ENCODE measurements at regions of chr20 and their contacts with region 1.

Region 1: GRCh38 chr20:35994994-35995453 is 26.6 kb downstream of the CNBD2 start:
- DNase-seq: peak; percentile 94
- ATAC-seq: peak; percentile 97
- H3K4me3 Mint-ChIP-seq: no peak overlapping the region
- H3K27ac Mint-ChIP-seq: no peak overlapping the region
- H3K4me1 Mint-ChIP-seq: peaks cover 10% of the 10 kb centered on the region
- H3K27me3 Mint-ChIP-seq: no peaks in the 10 kb centered on the region
- CTCF ChIP-seq: peak; percentile 71

Region 2: GRCh38 chr20:35968931-35969330 is 26.1 kb before region 1 on chr20:
- CTCF ChIA-PET with region 1: interaction called, 23 read pairs
- POLR2A ChIA-PET with region 1: no interaction called
- DNase-seq: no peak
- ATAC-seq: no peak
- H3K4me3 Mint-ChIP-seq: no peak overlapping the region
- H3K27ac Mint-ChIP-seq: no peak overlapping the region
- H3K4me1 Mint-ChIP-seq: peaks cover 11% of the 10 kb centered on the region
- H3K27me3 Mint-ChIP-seq: no peaks in the 10 kb centered on the region; the same call in 1 of the 2 replicates
- CTCF ChIP-seq: no peak

Region 3: DNA sequence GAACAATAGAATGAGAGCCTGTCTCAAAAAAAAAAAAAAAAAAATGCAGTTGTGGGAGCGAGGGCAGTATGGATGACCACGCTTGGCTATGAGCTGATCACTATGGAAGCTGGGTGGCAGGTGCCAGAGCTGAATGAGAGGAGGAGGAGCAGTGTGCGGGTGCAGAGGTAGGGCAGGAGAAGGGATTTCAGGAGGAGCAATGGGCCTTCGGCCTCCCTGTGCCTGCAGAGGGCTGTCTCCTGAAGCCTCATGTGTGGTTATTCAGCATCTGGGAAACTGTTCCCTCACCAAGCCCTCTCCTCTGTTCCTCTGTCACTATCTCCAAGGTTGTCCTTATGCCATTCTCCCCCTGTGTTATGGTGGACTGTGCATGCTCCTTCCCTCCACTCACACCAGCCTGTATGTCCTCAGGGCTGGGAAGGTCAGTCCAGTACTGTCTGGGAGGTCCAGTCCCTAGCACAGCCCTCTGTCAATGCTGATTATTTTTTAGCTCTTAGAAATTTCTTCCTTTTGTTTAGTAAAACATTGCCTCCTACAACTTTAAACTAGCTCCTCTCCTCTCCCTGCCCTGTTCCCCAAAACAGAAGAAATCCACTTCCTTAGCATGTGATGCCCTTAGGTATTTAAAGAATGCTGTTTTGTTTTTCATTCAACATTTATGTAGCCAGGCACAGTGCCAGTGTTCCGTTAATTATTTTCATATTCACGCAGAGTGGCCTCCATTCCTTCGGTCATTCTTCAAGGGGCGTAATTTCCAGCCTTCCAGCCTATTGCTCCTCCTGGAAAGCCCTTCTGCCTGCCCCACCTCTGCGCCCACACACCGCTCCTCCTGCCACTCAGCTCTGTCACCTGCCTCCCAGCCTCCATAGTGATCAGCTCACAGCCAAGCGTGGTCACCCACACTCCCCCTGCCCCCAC is 22.3 kb after region 1 on chr20:
- CTCF ChIA-PET with region 1: interaction called, 51 read pairs
- POLR2A ChIA-PET with region 1: no interaction called
- DNase-seq: no peak
- ATAC-seq: peak; percentile 48
- H3K4me3 Mint-ChIP-seq: no peak overlapping the region
- H3K27ac Mint-ChIP-seq: no peak overlapping the region
- H3K4me1 Mint-ChIP-seq: peaks cover 13% of the 10 kb centered on the region
- H3K27me3 Mint-ChIP-seq: no peaks in the 10 kb centered on the region; the same call in 1 of the 2 replicates
- CTCF ChIP-seq: no peak

Region 4: DNA sequence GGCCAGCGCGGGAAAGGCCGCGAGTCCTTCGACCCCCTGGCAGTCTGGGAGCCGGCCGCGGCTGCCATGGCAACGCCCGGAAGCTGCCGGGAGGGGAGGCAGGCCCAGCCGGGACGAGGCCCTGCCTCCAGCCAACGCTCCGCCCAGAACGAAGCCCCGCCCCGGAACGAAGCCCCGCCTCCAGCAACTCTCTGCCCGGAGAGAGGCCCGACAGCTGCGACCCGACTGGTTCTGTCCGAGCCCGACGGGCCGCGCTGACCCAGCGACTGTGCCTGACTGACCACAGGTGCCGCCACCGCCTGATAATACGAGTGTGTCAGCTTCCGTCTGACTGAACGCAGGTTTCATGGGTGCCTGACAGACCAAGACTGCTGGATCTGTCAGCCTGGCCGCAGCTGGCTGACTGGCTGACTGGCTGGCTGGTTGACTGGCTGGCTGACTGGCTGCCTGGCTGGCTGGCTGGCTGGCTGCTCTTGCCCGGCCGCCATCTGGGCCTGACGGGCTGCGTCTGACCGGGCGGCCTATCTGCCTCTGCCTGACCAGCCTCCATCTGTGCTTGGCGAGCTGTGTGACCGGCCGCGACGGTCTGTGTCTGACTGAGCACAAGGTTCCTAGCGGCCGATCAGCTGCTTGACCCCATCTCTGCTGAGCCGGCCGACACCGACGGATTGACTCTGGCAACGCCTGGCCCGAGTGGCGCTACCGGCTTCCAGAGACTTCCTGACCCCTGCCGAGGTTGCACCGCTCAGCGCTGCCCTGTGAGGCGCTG is 69.8 kb after region 1 on chr20:
- CTCF ChIA-PET with region 1: interaction called, 19 read pairs
- POLR2A ChIA-PET with region 1: no interaction called
- DNase-seq: peak; percentile 98
- ATAC-seq: peak; percentile 95
- H3K4me3 Mint-ChIP-seq: peak overlapping the region; percentile 71
- H3K27ac Mint-ChIP-seq: no peak overlapping the region
- H3K4me1 Mint-ChIP-seq: peaks cover 7% of the 10 kb centered on the region; the same call in 1 of the 2 replicates
- H3K27me3 Mint-ChIP-seq: peaks cover 44% of the 10 kb centered on the region
- CTCF ChIP-seq: no peak

Region 5: DNA sequence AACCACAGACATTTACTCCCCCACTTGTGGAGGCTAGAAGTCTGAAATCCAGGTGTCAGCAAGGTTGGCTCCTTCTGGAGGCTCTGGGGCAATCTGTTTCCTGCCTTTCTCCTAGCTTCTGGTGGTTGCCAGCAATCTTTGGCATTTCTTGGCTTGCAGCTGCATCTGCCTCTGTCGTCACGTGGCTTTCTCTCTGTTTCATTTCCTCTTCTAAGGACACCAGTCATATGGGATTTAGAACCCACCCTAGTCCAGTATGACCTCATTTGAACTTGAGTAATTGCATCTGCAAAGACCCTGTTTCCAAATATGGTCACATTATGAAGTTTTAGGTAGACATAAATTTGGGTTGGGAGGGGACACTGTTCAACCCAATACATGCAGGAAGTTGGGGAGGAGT is 103.3 kb after region 1 on chr20:
- CTCF ChIA-PET with region 1: interaction called, 25 read pairs
- POLR2A ChIA-PET with region 1: no interaction called
- DNase-seq: no peak
- ATAC-seq: no peak
- H3K4me3 Mint-ChIP-seq: no peak overlapping the region
- H3K27ac Mint-ChIP-seq: no peak overlapping the region
- H3K4me1 Mint-ChIP-seq: peaks cover 28% of the 10 kb centered on the region
- H3K27me3 Mint-ChIP-seq: peaks cover 100% of the 10 kb centered on the region
- CTCF ChIP-seq: no peak

Region 6: DNA sequence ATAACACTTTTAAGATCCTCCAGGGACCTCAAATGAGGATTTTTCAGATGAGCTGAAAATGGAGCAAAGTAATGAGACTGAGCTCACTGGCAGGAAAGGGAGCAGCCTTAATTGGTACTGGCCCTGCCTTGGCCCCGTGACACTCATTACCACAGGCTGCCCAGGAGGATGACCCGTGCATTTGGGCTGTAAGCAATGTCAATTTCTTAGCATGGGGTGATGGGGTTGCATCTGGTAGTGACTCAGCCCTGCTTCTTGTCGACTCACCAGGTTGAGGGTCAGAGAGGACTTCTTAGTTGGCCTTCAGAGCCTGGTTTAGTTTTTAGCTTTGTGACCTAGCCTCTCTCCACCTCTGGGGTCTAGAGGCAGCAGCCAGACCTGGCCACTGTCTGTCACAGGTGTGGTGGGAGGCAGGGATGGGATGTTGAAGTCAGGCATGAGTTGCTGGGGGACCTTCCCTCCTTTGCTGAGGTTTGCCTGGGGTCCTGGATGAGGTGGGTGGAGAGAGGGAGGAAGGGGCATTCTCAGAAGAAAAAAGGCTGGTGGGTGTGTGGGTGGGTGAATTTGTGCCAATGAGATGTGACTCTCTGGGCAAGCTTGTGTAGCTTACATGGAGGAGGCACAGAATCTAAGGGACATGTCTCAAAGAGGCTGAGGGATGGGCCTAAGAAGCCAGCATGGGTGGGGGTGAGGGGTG is 133.6 kb after region 1 on chr20:
- CTCF ChIA-PET with region 1: interaction called, 22 read pairs
- POLR2A ChIA-PET with region 1: interaction called, 3 read pairs
- DNase-seq: no peak
- ATAC-seq: no peak
- H3K4me3 Mint-ChIP-seq: no peak overlapping the region
- H3K27ac Mint-ChIP-seq: no peak overlapping the region
- H3K4me1 Mint-ChIP-seq: 0 out of 2 replicates have a peak, but pooled peaks cover 7% of the 10 kb centered on the region
- H3K27me3 Mint-ChIP-seq: no peaks in the 10 kb centered on the region
- CTCF ChIP-seq: no peak

Region 7: GRCh38 chr20:36199345-36200257 is 204.6 kb after region 1 on chr20:
- CTCF ChIA-PET with region 1: interaction called, 38 read pairs
- POLR2A ChIA-PET with region 1: no interaction called
- DNase-seq: peak; percentile 93
- ATAC-seq: peak; percentile 86
- H3K4me3 Mint-ChIP-seq: no peak overlapping the region
- H3K27ac Mint-ChIP-seq: no peak overlapping the region
- H3K4me1 Mint-ChIP-seq: peaks cover 4% of the 10 kb centered on the region
- H3K27me3 Mint-ChIP-seq: no peaks in the 10 kb centered on the region
- CTCF ChIP-seq: peak; percentile 86

Measured in WTC11 (cell line).